Dendritic cell treated with granulocyte-macrophage colony-stimulating factor and Interleukin-4, amounts not matched to agents 40 ng/mL and 50 ng/mL, for 4 days (primary cell): ENCODE measurements at regions of chr13 and their contacts with region 1.

Region 1: DNA sequence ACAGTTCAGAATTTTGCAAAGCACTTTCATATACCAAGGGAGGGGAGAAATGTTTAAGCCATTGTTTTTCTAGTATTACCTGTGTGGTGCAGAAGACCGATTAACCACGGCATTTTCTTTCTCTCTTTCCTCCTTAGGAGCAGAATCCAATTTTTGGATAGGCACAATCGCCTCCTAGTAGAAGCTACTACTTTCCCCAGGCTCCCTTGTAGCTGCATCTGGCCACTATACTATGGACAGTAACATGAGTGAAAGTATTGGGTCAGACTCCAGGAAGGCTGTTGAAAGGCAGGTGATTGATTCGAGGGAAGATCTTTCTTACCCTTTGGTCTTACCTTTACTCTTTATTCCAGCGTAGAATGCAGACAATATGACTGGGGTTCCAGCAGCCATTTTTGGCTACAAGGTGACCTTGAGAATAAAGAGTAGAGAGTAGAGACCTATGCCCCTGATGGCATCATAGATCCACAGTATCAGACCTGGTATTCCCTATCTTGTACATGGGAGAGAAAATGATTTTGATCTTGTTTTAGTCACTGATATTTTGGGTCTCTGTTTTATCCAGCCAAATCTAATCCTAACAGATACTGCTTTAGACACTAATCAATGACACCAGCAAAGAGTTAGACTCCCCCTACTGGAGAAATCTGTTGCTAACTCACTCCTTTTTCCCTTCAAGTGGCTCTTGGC is 77.0 kb downstream of the LRRC63 start:
- H3K4me3 Mint-ChIP-seq: no peak overlapping the region
- H3K27ac Mint-ChIP-seq: no peak overlapping the region
- H3K4me1 Mint-ChIP-seq: peaks cover 25% of the 10 kb centered on the region
- H3K27me3 Mint-ChIP-seq: no peaks in the 10 kb centered on the region

Region 2: DNA sequence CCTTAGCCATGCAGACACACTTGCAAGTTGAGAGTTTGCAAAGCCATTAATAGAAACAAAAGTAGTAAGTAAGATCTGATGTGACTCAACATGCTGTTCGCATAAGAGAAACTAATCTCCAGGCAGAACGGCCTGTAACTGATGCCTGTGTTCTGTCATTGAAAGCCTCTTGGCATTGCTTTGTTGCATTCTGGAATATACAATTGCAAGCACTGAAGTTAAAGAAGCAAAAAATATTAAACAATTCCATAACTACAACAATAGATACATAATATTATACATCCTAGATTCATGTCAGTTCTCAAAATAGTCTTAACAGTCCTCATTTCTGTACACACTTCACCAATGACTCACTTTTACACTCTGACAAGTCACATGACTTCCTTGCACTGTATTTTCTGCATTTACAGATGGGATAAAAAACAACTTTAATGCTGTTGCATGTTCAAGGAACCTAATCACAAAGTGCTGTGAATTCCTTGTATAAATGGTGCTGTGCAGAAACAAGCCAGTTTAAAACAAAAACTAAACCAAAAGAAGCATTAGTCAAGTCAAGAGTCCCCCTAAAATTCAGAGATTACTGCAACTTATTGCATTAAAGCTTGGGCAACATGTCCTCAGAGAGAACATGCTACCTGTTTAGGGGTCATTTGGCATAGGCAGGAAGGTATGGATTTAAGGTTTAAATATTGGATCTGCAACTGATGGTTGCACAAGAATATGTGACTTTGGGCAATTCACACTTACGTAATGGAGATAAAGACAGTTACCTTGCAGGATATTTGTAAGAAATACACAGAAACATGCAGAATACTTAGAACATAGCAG is 1994.6 kb before region 1 on chr13:
- intact Hi-C with region 1: no loop called
- H3K4me3 Mint-ChIP-seq: no peak overlapping the region
- H3K27ac Mint-ChIP-seq: no peak overlapping the region
- H3K4me1 Mint-ChIP-seq: peaks cover 29% of the 10 kb centered on the region
- H3K27me3 Mint-ChIP-seq: peaks cover 42% of the 10 kb centered on the region

Region 3: DNA sequence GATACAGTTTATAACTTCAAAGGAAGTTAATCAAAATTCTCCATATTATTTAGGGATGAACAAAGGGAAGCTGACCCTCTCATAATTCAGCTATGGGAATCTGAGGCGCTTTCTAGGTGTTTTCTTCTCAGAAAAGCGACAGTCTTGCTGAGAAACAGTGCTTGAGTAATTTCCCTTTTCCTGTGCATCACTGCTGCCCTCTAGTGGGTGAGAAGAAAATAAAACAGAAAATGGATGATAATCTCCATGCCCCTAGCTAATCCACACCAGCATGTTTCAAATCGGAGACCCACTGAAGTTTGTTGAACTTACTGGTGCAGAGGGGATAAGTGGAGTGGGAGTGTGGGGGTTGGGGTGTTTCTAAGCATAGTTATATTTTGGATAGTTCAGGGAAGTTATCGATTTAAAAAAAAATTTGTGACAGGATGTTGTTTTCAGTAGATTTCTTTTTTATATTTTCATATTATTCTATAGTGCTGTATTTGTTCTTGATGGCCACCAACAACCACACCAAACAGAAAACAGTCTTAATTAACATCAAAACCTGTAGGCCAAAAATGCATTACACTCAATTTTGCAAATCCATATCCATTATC is 128.1 kb before region 1 on chr13:
- intact Hi-C with region 1: loop called (anchors 1 kb)
- H3K4me3 Mint-ChIP-seq: no peak overlapping the region
- H3K27ac Mint-ChIP-seq: peak overlapping the region; percentile 60
- H3K4me1 Mint-ChIP-seq: peaks cover 52% of the 10 kb centered on the region
- H3K27me3 Mint-ChIP-seq: no peaks in the 10 kb centered on the region

Region 4: GRCh38 chr13:46184277-46184699 is 104.4 kb before region 1 on chr13:
- intact Hi-C with region 1: loop called (anchors 5 kb)
- H3K4me3 Mint-ChIP-seq: peak overlapping the region; percentile 33
- H3K27ac Mint-ChIP-seq: peak overlapping the region; percentile 86
- H3K4me1 Mint-ChIP-seq: peaks cover 59% of the 10 kb centered on the region
- H3K27me3 Mint-ChIP-seq: no peaks in the 10 kb centered on the region

Region 5: DNA sequence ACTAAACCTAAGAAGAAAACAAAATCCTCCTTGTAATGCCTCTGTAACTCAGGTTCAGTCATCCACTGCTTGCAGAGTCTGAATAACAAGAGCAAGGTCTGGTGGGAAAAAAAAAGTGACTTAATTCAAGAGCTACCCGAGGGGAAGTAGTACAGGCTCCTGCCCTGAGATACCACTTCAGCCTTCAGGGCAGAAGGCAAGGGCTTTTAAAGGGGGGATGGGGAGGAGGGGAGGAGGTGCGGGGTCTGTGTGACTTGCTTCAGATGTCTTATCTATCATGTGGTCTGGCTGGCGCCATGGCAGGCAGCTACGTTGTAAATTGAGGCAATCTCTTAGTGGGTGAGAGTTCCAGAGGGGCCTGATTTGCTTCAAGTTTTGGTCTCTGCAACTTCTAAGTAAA is 10.2 kb before region 1 on chr13:
- intact Hi-C with region 1: no loop called
- H3K4me3 Mint-ChIP-seq: no peak overlapping the region
- H3K27ac Mint-ChIP-seq: no peak overlapping the region
- H3K4me1 Mint-ChIP-seq: peaks cover 4% of the 10 kb centered on the region
- H3K27me3 Mint-ChIP-seq: no peaks in the 10 kb centered on the region

Region 6: DNA sequence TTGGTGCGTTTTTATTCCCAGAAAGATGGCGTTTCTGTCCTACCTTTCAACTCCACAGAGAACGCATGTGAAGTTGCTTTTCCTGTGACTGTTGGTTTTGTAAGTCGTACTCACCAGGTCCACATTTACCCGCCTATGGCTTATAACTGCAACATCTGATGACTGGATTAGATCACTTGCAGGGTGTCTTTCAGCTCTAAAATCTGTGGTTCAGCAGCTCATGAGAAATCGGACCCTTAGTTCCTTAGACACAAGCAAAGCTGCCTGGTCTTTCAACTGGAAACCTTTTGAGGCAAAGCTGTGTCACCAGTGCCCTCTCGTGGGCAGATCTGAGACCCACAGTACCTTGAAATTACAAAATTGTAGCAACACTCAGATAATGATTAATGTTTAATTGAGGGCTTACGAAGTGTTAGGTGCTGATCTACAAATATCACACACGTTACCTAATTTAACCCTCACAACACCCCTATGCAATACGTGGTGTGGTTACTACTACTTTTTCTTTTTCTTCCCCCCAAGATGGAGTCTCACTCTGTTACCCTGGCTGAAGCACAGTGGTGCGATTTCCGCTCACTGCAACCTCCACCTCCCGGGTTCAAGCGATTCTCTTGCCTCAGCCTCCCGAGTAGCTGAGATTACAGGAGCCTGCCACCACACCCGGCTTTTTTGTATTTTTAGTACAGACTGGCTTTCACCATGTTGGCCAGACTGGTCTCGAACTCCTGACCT is 32.9 kb after region 1 on chr13:
- intact Hi-C with region 1: loop called (anchors 5 kb)
- H3K4me3 Mint-ChIP-seq: no peak overlapping the region
- H3K27ac Mint-ChIP-seq: peak overlapping the region; percentile 85
- H3K4me1 Mint-ChIP-seq: peaks cover 61% of the 10 kb centered on the region
- H3K27me3 Mint-ChIP-seq: no peaks in the 10 kb centered on the region

Region 7: GRCh38 chr13:46687810-46688209 is 399.1 kb after region 1 on chr13:
- intact Hi-C with region 1: no loop called
- H3K4me3 Mint-ChIP-seq: no peak overlapping the region
- H3K27ac Mint-ChIP-seq: no peak overlapping the region
- H3K4me1 Mint-ChIP-seq: peaks cover 19% of the 10 kb centered on the region
- H3K27me3 Mint-ChIP-seq: no peaks in the 10 kb centered on the region